ENCODE measurements at regions of chr1 and their contacts with region 1.

Region 1: GRCh38 chr1:24830680-24831272 is 85.5 kb downstream of the CLIC4 start:
- DNase-seq: peak in 1 of 35 experiments; percentile 74
- ATAC-seq: peak in 2 of 4 experiments; percentile 54 to 63
- H3K4me3 ChIP-seq: no peak overlapping the region
- H3K4me3 Mint-ChIP-seq: no peak overlapping the region
- H3K27ac ChIP-seq: no peak overlapping the region
- H3K27ac Mint-ChIP-seq: no peak overlapping the region
- H3K4me1 ChIP-seq: no peaks in the 10 kb centered on the region
- H3K4me1 Mint-ChIP-seq: no peaks in the 10 kb centered on the region
- H3K27me3 ChIP-seq: no peaks in the 10 kb centered on the region
- H3K27me3 Mint-ChIP-seq: peaks cover 2 to 10% of the 10 kb centered on the region in 2 donors

Region 2: GRCh38 chr1:23484253-23485001 is 1346.3 kb before region 1 on chr1:
- CTCF ChIA-PET with region 1: no interaction called
- POLR2A ChIA-PET with region 1: no interaction called
- DNase-seq: peak; percentile 85 to 95 (median 91)
- ATAC-seq: peak; percentile 88 to 90 (median 89)
- H3K4me3 ChIP-seq: peak overlapping the region; percentile 60 to 62
- H3K4me3 Mint-ChIP-seq: peak overlapping the region; percentile 83 to 85 (median 84)
- H3K27ac ChIP-seq: no peak overlapping the region
- H3K27ac Mint-ChIP-seq: peak overlapping the region in 1 of 2 donors; percentile 77
- H3K4me1 ChIP-seq: peaks cover 2 to 15% of the 10 kb centered on the region in 2 experiments
- H3K4me1 Mint-ChIP-seq: peaks cover 15 to 17% (median 16%) of the 10 kb centered on the region in 3 donors
- H3K27me3 ChIP-seq: peaks cover 3 to 31% of the 10 kb centered on the region in 2 experiments
- H3K27me3 Mint-ChIP-seq: peaks cover 16 to 18% of the 10 kb centered on the region in 2 donors

Region 3: GRCh38 chr1:24688621-24689195 is 142.1 kb before region 1 on chr1:
- CTCF ChIA-PET with region 1: interaction called, 7 to 94 read pairs
- POLR2A ChIA-PET with region 1: no interaction called
- DNase-seq: peak in 32 of 35 experiments; percentile 9 to 71 (median 40)
- ATAC-seq: peak; percentile 52 to 77 (median 66)
- H3K4me3 ChIP-seq: no peak overlapping the region
- H3K4me3 Mint-ChIP-seq: no peak overlapping the region
- H3K27ac ChIP-seq: no peak overlapping the region
- H3K27ac Mint-ChIP-seq: peak overlapping the region in 1 of 2 donors; percentile 30
- H3K4me1 ChIP-seq: no peaks in the 10 kb centered on the region
- H3K4me1 Mint-ChIP-seq: peaks cover 0 to 5% (median 0%) of the 10 kb centered on the region in 3 donors
- H3K27me3 ChIP-seq: peaks cover 0 to 3% of the 10 kb centered on the region in 2 experiments
- H3K27me3 Mint-ChIP-seq: no peaks in the 10 kb centered on the region

Region 4: GRCh38 chr1:24727501-24728216 is 103.1 kb before region 1 on chr1:
- CTCF ChIA-PET with region 1: no interaction called
- POLR2A ChIA-PET with region 1: no interaction called
- DNase-seq: peak in 1 of 35 experiments; percentile 34
- ATAC-seq: peak in 1 of 4 experiments; percentile 20
- H3K4me3 ChIP-seq: no peak overlapping the region
- H3K4me3 Mint-ChIP-seq: no peak overlapping the region
- H3K27ac ChIP-seq: no peak overlapping the region
- H3K27ac Mint-ChIP-seq: no peak overlapping the region
- H3K4me1 ChIP-seq: peaks cover 0 to 4% of the 10 kb centered on the region in 2 experiments
- H3K4me1 Mint-ChIP-seq: peaks cover 4 to 10% (median 9%) of the 10 kb centered on the region in 3 donors
- H3K27me3 ChIP-seq: peaks cover 0 to 5% of the 10 kb centered on the region in 2 experiments
- H3K27me3 Mint-ChIP-seq: peaks cover 0 to 3% of the 10 kb centered on the region in 2 donors

Measured in T-cell (primary cell).